GM18951 (cell line): ENCODE measurements at regions of chr20 and their contacts with region 1.

Region 1: GRCh38 chr20:53570521-53571357 is 22.9 kb downstream of the ZNF217 start:
- POLR2A ChIP-seq: no peak

Region 2: GRCh38 chr20:54199721-54200176 is 629.0 kb after region 1 on chr20:
- in situ Hi-C with region 1: loop called (anchors 25 kb)
- POLR2A ChIP-seq: no peak